ENCODE measurements at regions of chr9 and their contacts with region 1.

Region 1: DNA sequence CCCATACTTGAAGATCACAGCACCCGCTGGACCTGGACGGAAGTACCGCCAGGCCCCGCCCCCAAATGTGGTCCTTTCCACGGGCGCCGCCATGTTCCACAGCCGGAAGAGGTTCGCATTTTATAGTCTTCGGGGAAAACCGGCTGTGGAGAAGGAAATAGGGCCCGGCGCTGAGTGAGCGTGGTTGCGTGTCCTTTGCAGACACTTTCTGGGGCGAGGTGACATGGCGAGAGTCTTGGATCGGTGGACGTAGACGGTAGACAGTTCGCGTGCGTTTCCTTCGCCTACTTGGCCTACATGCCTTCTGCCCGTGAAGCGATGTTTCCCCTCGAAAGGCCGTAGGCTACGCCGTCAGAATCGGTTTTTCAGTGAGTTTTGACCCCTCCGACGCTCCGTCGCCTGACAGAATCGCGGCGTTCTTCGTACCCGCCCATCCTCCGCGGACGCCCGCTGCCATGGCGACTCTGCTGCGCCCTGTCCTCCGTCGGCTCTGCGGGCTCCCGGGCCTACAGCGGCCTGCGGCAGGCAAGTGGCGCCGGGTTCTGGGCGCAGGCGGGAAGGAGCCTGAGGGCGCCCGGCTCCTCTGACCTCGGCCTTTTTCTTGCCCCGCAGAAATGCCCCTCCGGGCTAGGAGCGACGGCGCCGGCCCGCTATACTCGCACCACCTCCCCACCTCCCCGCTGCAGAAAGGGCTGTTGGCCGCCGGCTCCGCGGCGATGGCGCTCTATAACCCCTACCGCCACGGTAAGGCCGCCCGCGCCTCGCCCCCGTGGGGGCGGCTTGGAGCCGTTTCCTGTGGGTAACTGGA is at the starts of genes COQ4 and TRUB2:
- DNase-seq: peak; percentile 87 to 96 (median 90)
- ATAC-seq: peak; percentile 89
- H3K4me3 ChIP-seq: peak within 1 kb of the TSS; percentile 80
- H3K4me3 Mint-ChIP-seq: peak within 1 kb of the TSS; percentile 91
- H3K27ac ChIP-seq: peak within 1 kb of the TSS; percentile 80 to 91
- H3K27ac Mint-ChIP-seq: peak within 1 kb of the TSS; percentile 93
- H3K4me1 ChIP-seq: peaks cover 32% of the 10 kb centered on the region
- H3K4me1 Mint-ChIP-seq: peaks cover 31% of the 10 kb centered on the region
- H3K27me3 ChIP-seq: no peaks in the 10 kb centered on the region
- H3K27me3 Mint-ChIP-seq: no peaks in the 10 kb centered on the region
- CTCF ChIP-seq: no peak
- total RNA-seq, gene COQ4: 20.7 to 21.7 TPM
- total RNA-seq, gene TRUB2: 4.8 to 6.5 TPM

Region 2: DNA sequence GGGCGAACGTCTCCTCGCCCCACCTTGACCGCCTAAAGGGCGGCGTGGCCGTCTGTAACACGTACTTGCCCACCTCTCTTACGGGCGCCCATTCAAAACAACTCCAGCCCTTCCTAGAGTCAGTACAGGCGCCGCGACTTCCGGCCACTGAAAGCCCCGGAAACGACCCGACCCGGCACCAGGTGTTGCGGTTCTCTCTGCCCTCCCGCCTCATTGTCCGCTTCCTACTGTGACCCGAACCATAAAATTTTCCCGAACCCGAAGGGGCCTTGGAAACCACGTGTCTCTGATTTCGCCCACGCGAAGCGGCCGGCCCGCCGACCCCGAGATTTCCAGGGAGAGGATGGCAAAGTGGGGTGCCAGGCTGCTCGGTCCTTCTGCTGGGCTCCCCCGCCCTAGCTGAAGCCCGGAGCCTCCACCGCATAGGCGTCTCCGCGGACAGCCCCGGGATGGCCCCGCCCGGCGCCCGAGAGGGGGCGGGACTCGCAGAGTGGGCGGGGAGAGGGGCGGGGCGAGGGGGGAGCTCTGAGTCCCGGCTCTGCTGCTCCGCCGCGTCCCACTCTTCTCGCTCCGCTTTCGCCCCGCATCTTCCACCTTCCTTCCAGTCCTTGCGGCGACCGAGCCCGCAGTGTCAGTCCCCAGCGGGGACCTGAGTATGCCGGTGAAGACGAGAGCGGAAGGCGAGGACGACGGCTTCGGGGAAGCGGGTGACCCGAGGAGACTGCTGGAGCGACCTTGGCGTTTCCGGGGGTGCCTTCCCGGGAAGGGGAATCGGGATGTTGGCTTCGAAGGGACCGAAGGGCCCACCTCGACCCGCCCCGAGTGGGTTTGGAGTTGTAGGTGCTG is 194.4 kb before region 1 on chr9:
- CTCF ChIA-PET with region 1: no interaction called
- POLR2A ChIA-PET with region 1: no interaction called
- intact Hi-C with region 1: loop called in 1 of 2 experiments (anchors 10 kb)
- DNase-seq: peak; percentile 69 to 94 (median 84)
- ATAC-seq: peak; percentile 79
- H3K4me3 ChIP-seq: peak overlapping the region; percentile 99
- H3K4me3 Mint-ChIP-seq: peak overlapping the region; percentile 100
- H3K27ac ChIP-seq: peak overlapping the region; percentile 94 to 97
- H3K27ac Mint-ChIP-seq: peak overlapping the region; percentile 100
- H3K4me1 ChIP-seq: peaks cover 44% of the 10 kb centered on the region
- H3K4me1 Mint-ChIP-seq: peaks cover 42% of the 10 kb centered on the region
- H3K27me3 ChIP-seq: no peaks in the 10 kb centered on the region
- H3K27me3 Mint-ChIP-seq: peaks cover 3% of the 10 kb centered on the region
- CTCF ChIP-seq: no peak

Region 3: DNA sequence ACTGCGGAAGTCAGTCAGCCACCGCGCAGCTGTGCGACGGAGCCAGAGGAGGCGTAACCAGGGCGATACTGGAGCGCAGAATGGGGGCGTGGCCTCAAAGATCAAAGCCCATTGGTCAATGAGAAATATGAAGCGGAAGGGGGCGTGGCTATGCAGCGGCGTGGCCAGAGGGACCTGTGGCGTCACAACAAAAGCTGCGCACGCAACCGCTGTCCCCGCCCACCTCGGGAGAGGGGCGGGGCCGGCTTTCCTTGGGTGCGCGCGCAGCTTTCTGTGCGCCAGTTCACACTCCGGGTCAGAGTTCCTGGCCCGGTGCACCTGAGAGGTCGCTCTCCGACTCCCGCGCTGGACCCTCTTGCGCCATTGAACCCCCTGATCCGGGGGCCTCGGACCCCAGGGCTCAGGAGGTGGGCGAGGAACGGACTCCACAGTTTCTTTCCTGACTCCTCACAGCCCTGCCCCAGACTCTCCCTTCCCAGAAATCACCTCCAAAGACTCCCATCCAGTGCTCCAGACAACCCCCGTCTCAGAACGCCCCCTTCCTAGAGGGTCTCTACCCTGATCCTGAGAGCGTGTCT is 46.5 kb before region 1 on chr9 and contains the starts of genes GOLGA2 and SWI5:
- CTCF ChIA-PET with region 1: interaction called, 3 read pairs
- POLR2A ChIA-PET with region 1: interaction called, 8 read pairs
- intact Hi-C with region 1: loop called in 1 of 2 experiments (anchors 2 kb)
- DNase-seq: peak; percentile 99 to 100 (median 100)
- ATAC-seq: peak; percentile 96
- H3K4me3 ChIP-seq: peak within 1 kb of the TSS; percentile 98
- H3K4me3 Mint-ChIP-seq: peak within 1 kb of the TSS; percentile 98
- H3K27ac ChIP-seq: peak within 1 kb of the TSS; percentile 70 to 72
- H3K27ac Mint-ChIP-seq: peak within 1 kb of the TSS; percentile 88
- H3K4me1 ChIP-seq: peaks cover 31% of the 10 kb centered on the region
- H3K4me1 Mint-ChIP-seq: peaks cover 36% of the 10 kb centered on the region
- H3K27me3 ChIP-seq: no peaks in the 10 kb centered on the region
- H3K27me3 Mint-ChIP-seq: no peaks in the 10 kb centered on the region
- CTCF ChIP-seq: no peak
- total RNA-seq, gene GOLGA2: 44.3 to 48.3 TPM
- total RNA-seq, gene SWI5: 3.0 to 4.1 TPM

Region 4: GRCh38 chr9:128370826-128371621 is 48.4 kb after region 1 on chr9 and contains the start of gene URM1:
- CTCF ChIA-PET with region 1: no interaction called
- POLR2A ChIA-PET with region 1: interaction called, 3 read pairs
- intact Hi-C with region 1: loop called (anchors 1 to 2 kb)
- DNase-seq: peak; percentile 90 to 98 (median 94)
- ATAC-seq: peak; percentile 94
- H3K4me3 ChIP-seq: peak within 1 kb of the TSS; percentile 93
- H3K4me3 Mint-ChIP-seq: peak within 1 kb of the TSS; percentile 97
- H3K27ac ChIP-seq: peak within 1 kb of the TSS; percentile 68 to 92
- H3K27ac Mint-ChIP-seq: peak within 1 kb of the TSS; percentile 94
- H3K4me1 ChIP-seq: peaks cover 20% of the 10 kb centered on the region
- H3K4me1 Mint-ChIP-seq: peaks cover 34% of the 10 kb centered on the region
- H3K27me3 ChIP-seq: no peaks in the 10 kb centered on the region
- H3K27me3 Mint-ChIP-seq: no peaks in the 10 kb centered on the region
- CTCF ChIP-seq: no peak
- total RNA-seq, gene URM1: 28.4 to 28.8 TPM

Region 5: DNA sequence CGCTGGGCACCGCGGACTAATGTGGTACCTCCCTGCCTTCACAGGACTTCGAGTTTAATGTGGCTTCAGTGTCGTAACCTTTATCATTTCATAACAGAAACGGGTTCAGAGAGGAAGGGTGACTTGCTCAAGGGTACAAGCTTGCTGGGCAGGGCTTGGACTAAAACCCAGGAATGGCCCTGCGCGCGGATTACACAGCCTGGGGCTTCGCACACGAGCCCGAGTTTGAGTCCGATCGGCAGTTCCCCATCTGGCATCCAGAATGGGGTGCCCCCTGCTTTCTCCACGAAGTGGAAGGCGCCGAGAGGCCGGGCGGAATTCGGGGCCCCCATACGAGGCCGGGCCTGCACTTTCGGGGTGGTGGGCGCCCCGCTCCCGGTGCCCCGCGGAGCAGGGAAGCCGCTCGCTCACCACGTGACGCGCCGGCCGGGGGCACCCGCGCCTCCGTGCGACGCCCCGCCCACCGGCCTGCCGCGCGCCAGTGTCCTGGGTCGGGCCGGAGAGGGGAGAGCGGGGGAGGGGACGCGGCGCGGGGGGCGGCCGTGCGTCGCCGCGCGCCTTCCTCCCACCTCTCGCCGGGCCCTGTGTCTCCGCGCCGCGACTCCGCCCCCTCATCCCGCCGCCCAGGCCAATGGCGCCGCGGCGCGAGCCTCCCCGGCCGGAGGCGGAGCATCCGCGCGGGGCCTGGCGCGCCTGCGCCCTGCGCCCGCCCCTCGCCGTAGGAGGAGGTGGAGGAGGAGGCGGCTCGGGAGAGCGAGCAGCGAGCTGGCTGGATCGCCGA is 366.1 kb after region 1 on chr9 and contains the start of gene SET:
- CTCF ChIA-PET with region 1: no interaction called
- POLR2A ChIA-PET with region 1: no interaction called
- intact Hi-C with region 1: loop called in 1 of 2 experiments (anchors 2 kb)
- DNase-seq: peak; percentile 82 to 97 (median 92)
- ATAC-seq: peak; percentile 78
- H3K4me3 ChIP-seq: peak within 1 kb of the TSS; percentile 89
- H3K4me3 Mint-ChIP-seq: peak within 1 kb of the TSS; percentile 95
- H3K27ac ChIP-seq: peak within 1 kb of the TSS; percentile 84
- H3K27ac Mint-ChIP-seq: peak within 1 kb of the TSS; percentile 94
- H3K4me1 ChIP-seq: peaks cover 58% of the 10 kb centered on the region
- H3K4me1 Mint-ChIP-seq: peaks cover 59% of the 10 kb centered on the region
- H3K27me3 ChIP-seq: no peaks in the 10 kb centered on the region
- H3K27me3 Mint-ChIP-seq: no peaks in the 10 kb centered on the region
- CTCF ChIP-seq: no peak
- total RNA-seq, gene SET: 228 to 241 TPM